ENCODE measurements at regions of chr15 and their contacts with region 1.

Region 1: GRCh38 chr15:84924074-84924731 is 39.7 kb downstream of the SLC28A1 start:
- DNase-seq: no peak

Region 2: DNA sequence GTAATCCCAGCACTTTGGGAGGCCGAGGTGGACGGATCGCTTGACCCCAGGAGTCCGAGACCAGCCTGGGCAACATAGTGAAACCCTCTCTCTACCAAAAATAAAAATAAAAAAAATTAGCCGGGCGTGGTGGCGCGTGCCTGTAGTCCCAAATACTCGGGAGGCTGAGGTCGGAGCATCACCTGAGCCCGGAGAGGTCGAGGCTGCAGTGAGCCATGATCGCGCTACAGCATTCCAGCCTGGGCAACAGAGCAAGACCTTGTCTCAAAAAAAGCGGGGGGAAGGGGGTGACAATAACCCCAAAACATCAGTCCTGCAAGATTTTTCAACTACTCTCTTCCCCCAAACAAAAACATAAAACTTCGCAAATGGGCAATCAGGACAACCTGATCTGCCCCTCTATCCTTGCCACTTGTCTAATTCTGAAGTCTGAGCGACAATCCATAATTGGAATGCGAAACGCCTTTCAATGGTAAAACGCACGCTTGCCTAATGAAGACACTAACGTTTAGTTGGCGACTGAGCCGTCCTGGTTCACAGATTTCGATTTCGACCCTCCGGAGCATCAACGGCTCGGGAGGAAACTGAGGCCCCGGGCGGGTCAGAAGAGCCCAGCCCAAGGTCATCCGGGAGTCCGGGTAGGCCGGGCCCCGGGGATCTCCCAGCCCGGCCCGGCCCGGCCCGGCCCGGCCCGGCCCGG is 1858.0 kb before region 1 on chr15:
- intact Hi-C with region 1: no loop called
- DNase-seq: no peak

Region 3: GRCh38 chr15:84883916-84884768 is 40.1 kb before region 1 on chr15 and contains the start of gene SLC28A1:
- intact Hi-C with region 1: loop called in 1 of 2 experiments (anchors 5 kb)
- DNase-seq: no peak
- total RNA-seq, gene SLC28A1: 0.24 TPM in 1 of 2 donors, not detected in the other

Region 4: GRCh38 chr15:84894442-84895361 is 29.5 kb before region 1 on chr15:
- intact Hi-C with region 1: loop called in 1 of 2 experiments (anchors 1 kb)
- DNase-seq: no peak

Region 5: GRCh38 chr15:85554852-85555521 is 630.8 kb after region 1 on chr15:
- intact Hi-C with region 1: no loop called
- DNase-seq: no peak

Measured in posterior vena cava (tissue), 2 donors.